CD14-positive monocyte (primary cell): ENCODE measurements at regions of chr11 and their contacts with region 1.

Region 1: DNA sequence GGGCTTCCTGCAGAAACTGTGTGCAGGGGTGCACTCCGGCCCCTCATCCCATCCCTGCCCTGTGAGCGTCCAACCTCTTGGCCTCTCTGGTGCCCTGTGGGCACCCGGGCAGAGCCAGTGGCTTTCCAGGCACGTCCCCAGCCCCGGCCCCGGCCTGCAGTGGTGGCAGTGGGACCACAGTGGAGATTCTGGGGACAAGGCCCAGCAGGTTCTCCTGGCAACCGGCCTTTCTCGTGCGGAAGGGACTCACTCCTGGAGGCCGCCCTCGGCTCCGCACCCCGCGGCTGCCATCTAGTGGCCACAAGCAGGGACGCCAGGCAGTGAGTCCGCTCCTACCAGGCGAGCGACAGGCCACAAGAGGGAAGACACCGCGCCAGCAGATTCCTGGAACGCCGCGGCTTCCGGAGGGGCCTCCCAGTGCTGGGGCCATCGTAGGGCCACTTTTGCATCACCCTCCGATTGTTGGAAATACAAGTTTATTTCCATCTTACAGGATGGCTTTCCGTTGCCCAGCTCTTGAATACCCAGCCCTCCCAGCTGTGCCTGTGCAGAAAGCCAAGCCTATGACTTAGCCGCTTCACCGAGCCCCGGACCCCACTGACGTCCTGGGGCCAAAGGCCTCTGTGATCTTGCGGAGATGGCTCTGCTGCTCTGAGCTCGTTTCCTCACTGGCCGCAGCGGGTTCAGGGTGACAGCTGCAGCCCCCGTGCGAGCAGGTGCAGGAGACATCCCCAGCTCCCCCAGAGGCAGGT is 357.3 kb downstream of the CTTN start:
- DNase-seq: peak; percentile 3 to 39 (median 22)
- H3K4me3 ChIP-seq: no peak overlapping the region
- H3K4me3 Mint-ChIP-seq: no peak overlapping the region
- H3K27ac ChIP-seq: no peak overlapping the region
- H3K27ac Mint-ChIP-seq: no peak overlapping the region
- H3K4me1 ChIP-seq: no peaks in the 10 kb centered on the region
- H3K4me1 Mint-ChIP-seq: no peaks in the 10 kb centered on the region
- H3K27me3 ChIP-seq: peaks cover 0 to 10% of the 10 kb centered on the region in 2 donors
- H3K27me3 Mint-ChIP-seq: peaks cover 5 to 13% (median 11%) of the 10 kb centered on the region in 3 donors
- CTCF ChIP-seq: peak; percentile 94

Region 2: GRCh38 chr11:70467201-70468085 is 288.1 kb before region 1 on chr11:
- intact Hi-C with region 1: loop called (anchors 10 kb)
- DNase-seq: peak in 2 of 3 donors; percentile 2 to 27
- H3K4me3 ChIP-seq: no peak overlapping the region
- H3K4me3 Mint-ChIP-seq: no peak overlapping the region
- H3K27ac ChIP-seq: no peak overlapping the region
- H3K27ac Mint-ChIP-seq: no peak overlapping the region
- H3K4me1 ChIP-seq: no peaks in the 10 kb centered on the region
- H3K4me1 Mint-ChIP-seq: peaks cover 4% of the 10 kb centered on the region
- H3K27me3 ChIP-seq: no peaks in the 10 kb centered on the region
- H3K27me3 Mint-ChIP-seq: peaks cover 11 to 20% (median 17%) of the 10 kb centered on the region in 3 donors
- CTCF ChIP-seq: peak; percentile 75

Region 3: GRCh38 chr11:70727899-70728620 is 27.5 kb before region 1 on chr11:
- intact Hi-C with region 1: no loop called
- DNase-seq: no peak
- H3K4me3 ChIP-seq: no peak overlapping the region
- H3K4me3 Mint-ChIP-seq: no peak overlapping the region
- H3K27ac ChIP-seq: no peak overlapping the region
- H3K27ac Mint-ChIP-seq: no peak overlapping the region
- H3K4me1 ChIP-seq: no peaks in the 10 kb centered on the region
- H3K4me1 Mint-ChIP-seq: no peaks in the 10 kb centered on the region
- H3K27me3 ChIP-seq: no peaks in the 10 kb centered on the region
- H3K27me3 Mint-ChIP-seq: peaks cover 7 to 14% (median 11%) of the 10 kb centered on the region in 3 donors
- CTCF ChIP-seq: no peak